ENCODE measurements at regions of chr6 and their contacts with region 1.

Region 1: DNA sequence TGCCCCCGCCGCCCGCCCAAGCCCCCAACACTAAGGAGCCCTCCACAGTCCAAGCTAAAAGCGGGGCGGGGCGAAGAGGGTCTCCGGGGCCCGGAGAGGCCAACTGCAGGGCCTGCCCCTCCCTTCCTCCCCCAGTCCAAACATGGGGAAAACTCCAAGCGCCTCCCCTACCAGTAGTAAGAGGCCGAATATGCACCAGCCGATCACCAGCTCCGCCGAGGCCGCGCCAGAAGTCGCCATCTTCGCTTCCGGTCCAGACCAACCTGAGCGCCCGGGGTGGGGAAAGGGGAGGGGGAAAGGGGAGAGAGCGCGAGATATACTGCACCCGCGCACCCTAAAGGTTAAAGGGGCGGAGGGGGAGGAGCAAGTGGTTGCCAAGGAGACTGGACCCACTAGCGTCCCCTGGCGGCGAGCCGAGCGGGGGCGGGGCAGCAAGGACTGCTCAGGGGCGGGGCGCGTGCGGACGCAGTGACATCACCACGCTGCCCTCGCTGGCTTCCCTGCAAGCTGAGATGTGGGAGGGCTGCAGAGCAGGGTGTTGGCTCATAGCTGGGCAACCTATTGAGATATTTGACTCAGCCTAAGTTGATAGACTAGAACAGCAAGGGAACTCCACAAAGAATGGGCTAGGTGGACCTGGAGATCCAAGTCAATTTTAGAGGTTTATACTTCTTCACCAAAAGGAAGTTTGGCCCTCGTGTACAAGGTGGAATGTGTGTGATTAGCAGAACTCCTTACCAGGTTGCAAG is at the start of gene LMBRD1:
- DNase-seq: peak; percentile 97 to 100 (median 99)
- ATAC-seq: peak; percentile 80 to 86
- H3K4me3 Mint-ChIP-seq: peak within 1 kb of the TSS; percentile 86 to 98 (median 93)
- H3K27ac Mint-ChIP-seq: peak within 1 kb of the TSS; percentile 93 to 99 (median 98)
- H3K4me1 Mint-ChIP-seq: peaks cover 20 to 53% (median 49%) of the 10 kb centered on the region in 4 donors
- H3K27me3 Mint-ChIP-seq: no peaks in the 10 kb centered on the region
- polyA plus RNA-seq, gene LMBRD1: 29.7 to 38.0 (median 35.6) TPM

Region 2: GRCh38 chr6:69813508-69813907 is 16.7 kb after region 1 on chr6:
- POLR2A ChIA-PET with region 1: interaction called, 54 read pairs
- DNase-seq: peak in 1 of 10 donors; percentile 14
- ATAC-seq: peak; percentile 34 to 39
- H3K4me3 Mint-ChIP-seq: peak overlapping the region in 9 of 10 donors; percentile 15 to 65 (median 53)
- H3K27ac Mint-ChIP-seq: peak overlapping the region; percentile 47 to 96 (median 85)
- H3K4me1 Mint-ChIP-seq: peaks cover 32 to 75% (median 49%) of the 10 kb centered on the region in 4 donors
- H3K27me3 Mint-ChIP-seq: no peaks in the 10 kb centered on the region

Region 3: DNA sequence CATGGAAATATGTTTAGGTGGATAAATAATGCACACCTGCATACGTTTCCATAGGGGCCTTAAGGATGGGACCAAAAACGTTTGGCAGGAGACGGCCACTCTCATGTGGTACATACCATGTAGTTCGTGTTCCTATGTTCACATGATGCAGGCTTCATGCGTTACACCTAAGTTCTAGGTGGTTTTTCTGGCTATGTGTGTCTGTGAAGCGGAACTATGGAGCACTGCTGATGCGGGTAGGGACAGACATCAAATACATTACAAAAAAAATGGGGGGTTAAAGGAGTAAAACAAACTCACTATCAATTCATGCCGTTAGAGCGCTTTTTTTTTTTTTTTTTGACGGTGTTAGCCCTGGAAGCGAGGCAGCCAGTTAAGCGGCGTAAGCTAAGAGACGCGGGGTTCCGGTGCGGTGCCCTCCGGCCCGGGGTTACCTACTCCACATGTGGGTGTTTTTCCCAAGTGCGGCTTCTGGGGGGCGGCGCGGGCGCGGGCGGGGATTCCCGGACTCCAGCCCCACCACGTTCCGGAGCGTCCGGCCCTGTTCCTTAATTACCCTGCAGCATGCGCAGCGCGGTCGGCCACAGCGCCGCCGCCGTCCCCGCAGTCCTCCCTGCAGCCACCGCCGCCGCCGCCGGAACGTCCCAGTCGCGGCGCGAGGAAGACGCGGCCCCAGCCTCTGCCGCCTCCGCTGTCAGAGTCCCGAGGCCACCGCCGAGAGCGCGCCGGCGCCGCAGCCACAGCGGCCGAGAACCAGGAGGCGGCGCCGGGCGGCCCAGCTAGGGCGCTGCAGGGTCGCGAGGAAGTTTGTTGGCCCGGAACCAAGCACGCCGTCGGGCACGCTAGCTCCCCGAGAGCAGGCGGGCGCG is 70.2 kb after region 1 on chr6:
- POLR2A ChIA-PET with region 1: interaction called, 15 read pairs
- DNase-seq: peak; percentile 42 to 79 (median 60)
- ATAC-seq: peak; percentile 77 to 82
- H3K4me3 Mint-ChIP-seq: peak overlapping the region; percentile 82 to 98 (median 90)
- H3K27ac Mint-ChIP-seq: peak overlapping the region in 9 of 10 donors; percentile 1 to 88 (median 74)
- H3K4me1 Mint-ChIP-seq: peaks cover 5 to 39% (median 19%) of the 10 kb centered on the region in 4 donors
- H3K27me3 Mint-ChIP-seq: peaks cover 10 to 28% (median 16%) of the 10 kb centered on the region in 5 donors

Region 4: GRCh38 chr6:69894578-69895347 is 97.9 kb after region 1 on chr6:
- POLR2A ChIA-PET with region 1: no interaction called
- DNase-seq: no peak
- ATAC-seq: no peak
- H3K4me3 Mint-ChIP-seq: no peak overlapping the region
- H3K27ac Mint-ChIP-seq: peak overlapping the region in 1 of 10 donors; percentile 18
- H3K4me1 Mint-ChIP-seq: peaks cover 0 to 5% (median 0%) of the 10 kb centered on the region in 4 donors
- H3K27me3 Mint-ChIP-seq: peaks cover 0 to 8% (median 0%) of the 10 kb centered on the region in 5 donors

Measured in naive thymus-derived CD8-positive, alpha-beta T cell (primary cell).